Right ventricle myocardium inferior (tissue), 1 donor: ENCODE measurements at regions of chr19 and their contacts with region 1.

Region 1: GRCh38 chr19:36114763-36115452 is at the start of gene POLR2I:
- DNase-seq: peak; percentile 99
- ATAC-seq: peak; percentile 96
- total RNA-seq, gene POLR2I: 145 TPM

Region 2: DNA sequence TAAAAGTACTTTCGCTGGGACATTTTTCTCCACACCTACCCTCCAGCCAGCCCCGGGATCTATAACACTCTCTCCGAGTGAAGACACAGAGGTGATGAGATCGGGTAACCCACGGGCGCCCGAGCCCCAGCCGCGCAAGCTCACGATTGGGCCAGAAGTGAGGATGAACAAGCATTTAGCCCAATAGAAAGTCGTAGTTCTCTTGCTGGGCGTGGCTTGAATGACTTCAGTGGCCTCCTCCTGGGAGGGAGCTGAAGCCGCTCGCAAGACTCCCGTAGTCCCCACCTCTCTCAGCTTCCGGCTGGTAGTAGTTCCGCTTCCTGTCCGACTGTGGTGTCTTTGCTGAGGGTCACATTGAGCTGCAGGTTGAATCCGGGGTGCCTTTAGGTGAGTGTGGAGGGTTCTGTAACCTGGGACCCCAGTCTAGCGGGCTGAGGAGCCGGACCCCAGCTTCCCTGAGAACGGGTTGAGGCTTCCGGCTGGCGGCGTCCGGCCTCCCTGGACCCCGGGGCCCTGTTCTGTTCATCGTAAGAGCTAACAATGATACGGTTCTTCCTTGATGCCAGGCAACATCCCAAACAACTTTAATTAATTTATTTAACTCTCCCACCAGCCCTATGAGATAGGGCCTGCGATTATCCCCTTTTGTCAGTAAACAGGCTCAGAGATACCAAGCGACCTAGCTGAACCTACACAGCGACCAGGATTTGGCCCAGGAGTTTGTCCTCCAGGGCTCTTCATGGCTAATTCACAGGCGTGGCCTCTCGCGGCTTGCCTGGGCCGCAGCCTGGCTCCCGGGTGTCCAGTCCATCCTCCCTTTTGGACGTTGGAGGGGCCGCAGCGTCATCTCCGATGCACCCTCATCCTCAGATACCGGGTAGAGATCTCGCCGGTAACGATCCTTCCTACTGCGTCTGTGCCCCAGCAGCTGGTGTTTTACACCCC is 466.6 kb before region 1 on chr19 and contains the start of gene COX6B1:
- intact Hi-C with region 1: no loop called
- DNase-seq: peak; percentile 94
- ATAC-seq: peak; percentile 75
- total RNA-seq, gene COX6B1: 1,537 TPM

Region 3: DNA sequence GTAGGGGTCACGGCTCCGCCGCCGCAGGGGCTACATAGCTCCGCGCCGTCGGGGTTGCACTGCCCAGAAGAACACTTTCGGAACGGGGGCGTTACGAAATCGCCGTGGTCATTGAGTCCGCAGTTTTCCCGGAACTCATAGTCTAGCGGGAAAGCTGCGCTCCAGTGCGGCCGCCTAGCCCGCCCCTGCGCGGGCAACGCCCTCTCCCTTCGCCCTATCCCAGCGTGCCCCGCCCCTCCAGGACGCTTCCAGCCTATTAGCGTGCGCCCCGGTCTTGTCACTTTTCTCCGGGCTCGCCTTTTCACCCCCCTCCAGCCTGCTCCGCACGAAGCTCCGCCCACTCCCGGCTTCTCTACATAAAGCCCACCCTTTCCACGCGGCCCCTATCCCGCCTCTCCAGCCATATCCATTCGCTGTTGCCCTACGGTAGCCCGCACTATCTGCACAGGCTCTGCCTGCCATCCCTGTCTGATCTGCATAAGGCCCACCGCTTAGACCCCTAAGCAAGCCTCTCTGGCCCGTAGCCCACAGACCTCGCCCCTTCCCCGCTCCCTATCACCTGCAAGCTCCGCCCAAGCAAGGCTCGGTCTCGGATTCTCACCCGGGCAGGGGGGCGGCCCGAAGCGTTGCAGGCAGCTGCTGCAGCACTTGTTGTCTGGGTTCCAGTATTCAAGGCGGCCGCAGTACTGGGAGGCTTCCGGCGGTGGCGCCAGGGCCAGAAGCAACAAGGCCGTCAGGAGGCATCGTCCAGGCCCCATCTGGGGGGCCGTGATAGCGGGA is 374.3 kb before region 1 on chr19:
- intact Hi-C with region 1: loop called (anchors 10 kb)
- DNase-seq: peak; percentile 99
- ATAC-seq: peak; percentile 90

Region 4: DNA sequence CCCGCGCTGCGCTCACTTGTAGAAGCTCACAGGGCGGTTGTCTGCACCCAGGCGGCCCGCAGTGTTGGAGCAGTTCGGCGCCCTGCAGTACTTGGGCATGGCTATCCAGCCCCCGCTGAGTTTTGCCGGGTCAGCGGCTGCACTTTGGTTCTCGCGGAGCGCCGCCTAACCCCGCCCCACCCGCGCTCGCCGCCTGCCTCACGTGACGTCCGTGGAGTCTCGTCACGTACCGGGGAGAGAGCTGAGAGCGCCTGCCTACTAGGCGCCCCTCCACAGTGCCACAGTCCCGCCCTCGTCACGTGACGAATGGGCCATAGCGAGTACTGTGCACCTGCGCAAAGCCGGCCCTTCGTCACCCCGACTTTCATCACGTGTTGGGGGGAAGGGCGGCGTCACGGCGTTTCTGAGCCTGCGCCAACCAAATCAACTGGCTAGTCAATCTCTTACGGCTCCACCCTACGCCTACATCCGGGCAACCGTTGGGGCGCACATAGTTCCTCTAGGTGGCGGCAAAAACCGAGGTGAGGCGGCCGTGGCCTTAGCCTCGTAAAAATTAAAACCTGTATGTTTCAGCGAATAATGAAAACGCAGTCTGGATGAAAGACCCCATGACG is 60.7 kb before region 1 on chr19 and contains the start of gene THAP8:
- intact Hi-C with region 1: loop called (anchors 2 kb)
- DNase-seq: peak; percentile 100
- ATAC-seq: peak; percentile 98
- total RNA-seq, gene THAP8: 4.1 TPM

Region 5: DNA sequence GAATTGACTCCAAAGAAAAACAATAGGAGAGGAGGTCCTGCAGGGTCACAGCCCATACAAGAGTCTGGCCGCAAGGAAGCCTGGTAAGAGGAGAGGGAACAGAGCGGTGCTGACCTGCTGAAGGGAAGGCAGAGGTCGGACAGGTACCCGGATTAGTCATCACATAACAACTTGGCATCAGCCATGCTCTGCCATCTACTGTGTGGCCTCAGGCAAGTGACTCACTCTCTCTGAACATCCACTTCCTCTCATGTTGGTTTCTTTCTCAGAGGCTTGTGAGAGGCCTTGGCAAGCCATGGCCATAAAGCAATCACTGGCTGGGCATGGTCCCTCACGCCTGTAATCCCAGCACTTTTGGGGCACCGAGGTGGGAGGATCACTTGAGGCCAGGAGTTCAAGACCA is 17.6 kb after region 1 on chr19:
- intact Hi-C with region 1: loop called (anchors 1 kb)
- DNase-seq: no peak
- ATAC-seq: no peak

Region 6: GRCh38 chr19:36182612-36183244 is 67.8 kb after region 1 on chr19:
- intact Hi-C with region 1: no loop called
- DNase-seq: no peak
- ATAC-seq: peak; percentile 27